Astrocyte of the cerebellum (primary cell): ENCODE measurements at regions of chr21 and their contacts with region 1.

Region 1: DNA sequence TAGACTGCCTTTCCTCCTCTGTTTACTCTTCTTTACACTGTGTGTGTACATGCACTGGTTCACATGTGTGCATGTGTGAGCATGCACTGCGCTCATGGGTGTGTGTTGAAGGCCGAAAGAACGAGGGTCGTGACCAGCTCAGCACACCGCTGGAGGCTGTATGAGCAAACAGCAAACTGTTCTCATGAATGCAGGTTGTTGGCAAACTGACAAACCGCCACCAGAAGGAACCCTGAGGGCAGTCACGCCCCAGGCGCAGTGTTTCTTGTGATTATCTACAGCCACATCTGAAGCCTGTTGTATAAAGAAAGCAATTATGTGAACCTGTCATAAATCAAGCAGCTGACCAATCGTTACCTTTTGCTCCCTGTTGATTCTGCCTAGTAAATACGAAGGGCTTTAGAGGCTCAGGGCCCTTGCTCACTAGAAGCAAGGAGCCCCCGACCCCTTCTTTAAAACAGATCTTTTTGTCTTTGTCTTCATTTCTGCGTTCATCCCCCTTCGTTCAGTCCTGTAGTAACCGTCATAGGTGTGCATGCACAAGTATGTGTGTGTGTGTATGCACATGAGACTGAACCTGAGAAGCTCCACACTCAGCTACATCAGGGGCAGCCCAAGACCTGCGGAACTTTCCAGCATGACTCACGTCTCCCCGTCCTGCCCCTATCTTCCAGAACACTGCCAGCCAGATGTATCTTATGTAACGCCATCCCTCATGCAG is 16.7 kb upstream of the RIPK4 start:
- DNase-seq: peak; percentile 79
- H3K4me3 ChIP-seq: no peak overlapping the region
- CTCF ChIP-seq: no peak

Region 2: GRCh38 chr21:41612674-41613532 is 170.7 kb before region 1 on chr21:
- in situ Hi-C with region 1: loop called (anchors 5 kb)
- DNase-seq: peak; percentile 99
- H3K4me3 ChIP-seq: no peak overlapping the region
- CTCF ChIP-seq: peak; percentile 66